Activated CD4-positive, alpha-beta memory T cell treated with anti-CD3 and anti-CD28 coated beads for 36 hours (primary cell): ENCODE measurements at regions of chr10 and their contacts with region 1.

Region 1: GRCh38 chr10:31875608-31876007 is 53.0 kb downstream of the ARHGAP12 start:
- DNase-seq: peak; percentile 18
- H3K4me3 Mint-ChIP-seq: no peak overlapping the region
- H3K27ac Mint-ChIP-seq: no peak overlapping the region
- H3K4me1 Mint-ChIP-seq: peaks cover 23% of the 10 kb centered on the region
- H3K27me3 Mint-ChIP-seq: no peaks in the 10 kb centered on the region

Region 2: GRCh38 chr10:31847515-31847914 is 28.1 kb before region 1 on chr10:
- CTCF ChIA-PET with region 1: no interaction called
- POLR2A ChIA-PET with region 1: no interaction called
- intact Hi-C with region 1: no loop called
- DNase-seq: no peak
- H3K4me3 Mint-ChIP-seq: no peak overlapping the region
- H3K27ac Mint-ChIP-seq: no peak overlapping the region
- H3K4me1 Mint-ChIP-seq: peaks cover 6% of the 10 kb centered on the region
- H3K27me3 Mint-ChIP-seq: no peaks in the 10 kb centered on the region

Region 3: DNA sequence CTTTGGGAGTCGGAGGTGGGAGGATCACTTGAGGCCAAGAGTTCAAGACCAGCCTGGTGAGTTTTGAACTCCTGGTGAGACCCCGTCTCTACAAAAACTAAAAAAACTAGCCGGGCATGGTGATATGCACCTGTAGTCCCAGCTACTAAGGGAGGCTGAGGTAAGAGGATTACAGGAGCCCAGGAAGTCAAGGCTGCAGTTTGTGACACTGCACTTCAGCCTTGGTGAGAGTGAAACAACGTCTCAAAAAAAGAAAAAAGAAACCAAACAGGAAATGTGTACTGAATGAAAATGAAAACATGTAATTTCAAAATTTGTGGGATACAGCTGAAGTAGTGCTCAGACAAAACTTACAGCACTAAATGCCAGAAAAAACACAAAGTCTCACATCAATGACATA is 45.4 kb after region 1 on chr10:
- CTCF ChIA-PET with region 1: no interaction called
- POLR2A ChIA-PET with region 1: interaction called, 4 read pairs
- intact Hi-C with region 1: loop called (anchors 2 kb)
- DNase-seq: peak; percentile 43
- H3K4me3 Mint-ChIP-seq: peak overlapping the region; percentile 45
- H3K27ac Mint-ChIP-seq: peak overlapping the region; percentile 35
- H3K4me1 Mint-ChIP-seq: peaks cover 56% of the 10 kb centered on the region
- H3K27me3 Mint-ChIP-seq: no peaks in the 10 kb centered on the region